ENCODE measurements at regions of chr1 and their contacts with region 1.

Region 1: DNA sequence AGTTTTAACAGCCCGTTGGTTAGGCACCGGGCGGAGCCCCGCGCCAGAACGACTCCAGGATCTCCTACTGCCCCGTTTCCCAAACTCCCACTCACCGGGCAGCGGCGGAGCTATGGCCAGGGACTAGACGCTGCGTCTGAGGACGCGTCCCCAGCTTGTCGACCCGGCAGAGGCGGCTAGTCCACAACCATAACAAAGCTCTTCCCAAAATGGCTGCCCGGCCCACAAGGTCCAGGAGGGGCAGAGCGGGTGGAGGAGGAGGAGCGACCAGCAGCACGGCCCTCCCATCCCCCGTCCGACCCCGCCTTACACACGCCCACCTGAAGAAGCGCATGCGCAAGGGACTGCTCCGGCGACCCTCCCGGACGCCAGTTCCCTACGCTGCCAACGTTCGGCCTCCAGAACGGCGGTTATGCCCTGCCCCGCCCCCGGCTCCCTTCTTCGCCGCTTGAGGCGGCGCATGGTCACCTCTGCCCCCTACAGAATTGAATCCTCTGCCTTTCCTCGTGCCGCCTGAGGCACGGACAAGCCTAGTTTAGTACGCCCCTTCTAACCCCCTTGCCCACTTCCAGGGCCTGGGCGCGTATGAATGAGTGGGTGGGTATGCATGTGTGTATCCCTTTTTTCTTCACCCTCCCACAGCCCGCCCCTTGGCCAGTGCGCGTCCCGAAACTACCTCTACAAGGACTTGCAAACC is at the start of gene GPBP1L1:
- DNase-seq: peak; percentile 98
- ATAC-seq: peak; percentile 76
- H3K4me3 ChIP-seq: peak within 1 kb of the TSS; percentile 87 to 99 (median 94)
- H3K27ac ChIP-seq: peak within 1 kb of the TSS; percentile 95 to 98 (median 97)
- H3K4me1 ChIP-seq: peaks cover 39 to 43% of the 10 kb centered on the region in 2 donors
- H3K27me3 ChIP-seq: no peaks in the 10 kb centered on the region
- CTCF ChIP-seq: peak in 2 of 5 experiments; percentile 4 to 20
- POLR2A ChIP-seq: peak; percentile 73 to 83
- total RNA-seq, gene GPBP1L1: 58.5 to 99.5 (median 81.8) TPM

Region 2: DNA sequence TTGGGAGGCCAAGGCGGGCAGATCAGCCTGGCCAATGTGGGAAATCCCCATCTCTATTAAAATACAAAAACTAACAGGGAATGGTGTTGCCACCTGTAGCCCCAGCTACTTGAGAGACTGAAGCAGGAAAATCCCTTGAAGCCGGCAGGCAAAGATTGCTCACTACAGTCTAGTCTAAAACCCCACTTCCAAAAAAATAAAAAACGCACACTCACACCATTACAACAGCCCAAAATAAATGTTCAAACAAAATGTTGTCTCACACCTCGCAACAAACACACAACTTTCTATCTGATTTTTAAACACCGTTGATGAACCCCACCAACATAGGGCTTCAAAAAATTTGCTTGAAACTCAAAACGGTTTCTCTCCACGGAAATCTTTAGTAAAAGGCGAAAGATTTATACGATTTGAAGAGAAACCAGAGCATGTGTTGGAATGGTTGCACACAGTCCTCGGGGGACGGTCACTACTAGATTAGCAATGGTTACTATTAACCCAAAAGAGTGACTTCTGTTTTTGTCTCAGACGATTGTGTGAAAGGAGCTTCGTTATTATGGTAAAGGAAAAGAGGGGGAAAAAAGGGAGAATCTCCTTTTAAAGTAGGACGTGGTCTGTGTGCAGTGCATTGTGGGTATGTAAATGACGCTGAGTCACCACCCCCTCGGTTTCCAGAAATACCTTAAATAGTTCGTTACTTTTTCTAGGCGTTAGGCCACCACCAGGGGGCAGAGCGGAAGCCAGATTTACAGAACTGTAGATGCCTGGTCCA is 955.5 kb before region 1 on chr1 and contains the start of gene RNU5D-1:
- in situ Hi-C with region 1: no loop called
- intact Hi-C with region 1: loop called (anchors 10 kb)
- DNase-seq: peak; percentile 80 to 94
- ATAC-seq: peak; percentile 81 to 87
- H3K4me3 ChIP-seq: peak within 1 kb of the TSS in 3 of 4 donors; percentile 3 to 34 (median 3)
- H3K27ac ChIP-seq: peak within 1 kb of the TSS; percentile 70 to 87 (median 79)
- H3K4me1 ChIP-seq: peaks cover 9 to 12% of the 10 kb centered on the region in 2 donors
- H3K27me3 ChIP-seq: no peaks in the 10 kb centered on the region
- CTCF ChIP-seq: peak; percentile 77 to 89 (median 81)
- POLR2A ChIP-seq: peak; percentile 79 to 97
- total RNA-seq, gene RNU5D-1: not detected

Region 3: DNA sequence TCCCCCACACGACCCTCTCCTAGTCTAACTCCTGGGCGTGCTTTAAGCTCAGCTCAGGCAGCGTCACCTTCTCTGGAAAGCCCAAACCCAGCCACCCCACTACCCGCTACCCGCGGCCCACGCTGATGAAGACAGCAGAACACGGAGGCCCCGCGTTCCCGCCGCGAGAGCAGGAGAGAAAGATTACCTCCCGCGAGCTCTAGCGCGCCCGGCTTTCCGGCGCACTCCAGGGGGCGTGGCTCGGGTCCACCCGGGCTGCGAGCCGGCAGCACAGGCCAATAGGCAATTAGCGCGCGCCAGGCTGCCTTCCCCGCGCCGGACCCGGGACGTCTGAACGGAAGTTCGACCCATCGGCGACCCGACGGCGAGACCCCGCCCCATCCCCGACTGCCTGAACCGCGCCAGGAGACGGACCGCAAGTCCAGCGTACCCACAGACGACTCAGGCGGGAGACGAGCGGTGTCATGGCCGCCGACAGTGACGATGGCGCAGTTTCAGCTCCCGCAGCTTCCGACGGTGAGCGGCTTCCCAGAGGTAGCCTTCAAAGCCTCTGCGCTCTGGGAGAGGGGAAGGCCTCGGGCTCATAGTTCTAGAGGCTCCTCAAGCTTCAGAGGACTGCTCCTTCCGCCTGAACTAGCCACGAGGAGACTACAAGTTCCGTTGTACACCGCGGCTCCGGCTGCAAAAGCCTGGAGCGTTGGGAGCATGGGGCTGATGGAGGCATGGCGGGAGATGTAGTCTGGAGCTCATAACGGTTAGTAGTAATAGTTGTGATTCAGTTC is 346.5 kb before region 1 on chr1 and contains the starts of genes MUTYH and TOE1:
- in situ Hi-C with region 1: no loop called
- intact Hi-C with region 1: loop called (anchors 10 kb)
- DNase-seq: peak; percentile 81 to 88
- ATAC-seq: peak; percentile 92 to 93
- H3K4me3 ChIP-seq: peak within 1 kb of the TSS; percentile 88 to 98 (median 96)
- H3K27ac ChIP-seq: peak within 1 kb of the TSS; percentile 92 to 100 (median 100)
- H3K4me1 ChIP-seq: peaks cover 17 to 18% of the 10 kb centered on the region in 2 donors
- H3K27me3 ChIP-seq: no peaks in the 10 kb centered on the region
- CTCF ChIP-seq: peak in 2 of 5 experiments; percentile 26 to 34
- POLR2A ChIP-seq: peak; percentile 56
- total RNA-seq, gene MUTYH: 10.1 to 20.6 (median 11.0) TPM
- total RNA-seq, gene TOE1: 2.9 to 9.4 (median 5.3) TPM

Region 4: GRCh38 chr1:45583264-45583665 is 103.2 kb before region 1 on chr1:
- in situ Hi-C with region 1: loop called in 1 of 4 experiments (anchors 25 kb)
- intact Hi-C with region 1: loop called (anchors 1 kb)
- DNase-seq: peak; percentile 95 to 96
- ATAC-seq: peak; percentile 92 to 96
- H3K4me3 ChIP-seq: peak overlapping the region; percentile 82 to 97 (median 94)
- H3K27ac ChIP-seq: peak overlapping the region; percentile 92 to 99 (median 96)
- H3K4me1 ChIP-seq: peaks cover 22 to 23% of the 10 kb centered on the region in 2 donors
- H3K27me3 ChIP-seq: no peaks in the 10 kb centered on the region
- CTCF ChIP-seq: no peak
- POLR2A ChIP-seq: no peak

Region 5: DNA sequence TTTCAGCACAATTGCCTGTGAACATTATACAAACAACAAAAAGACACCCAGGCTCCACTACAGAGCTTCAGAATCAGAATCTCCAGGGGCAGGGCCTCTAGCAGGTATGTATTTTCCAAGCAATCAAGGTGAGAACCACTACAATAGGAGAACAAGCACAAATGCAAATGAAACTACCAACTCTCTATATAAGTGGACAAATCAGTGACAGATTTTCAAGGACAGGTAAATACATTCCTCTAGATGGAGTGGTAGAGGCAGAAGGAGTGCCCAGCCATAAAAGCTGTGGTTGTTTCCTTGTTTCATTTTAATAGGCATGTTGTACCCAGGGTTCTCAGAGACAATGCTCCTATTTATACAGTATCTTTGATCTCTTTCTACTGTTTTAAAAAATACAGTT is 42.5 kb before region 1 on chr1:
- in situ Hi-C with region 1: no loop called
- intact Hi-C with region 1: no loop called
- DNase-seq: no peak
- ATAC-seq: peak in 1 of 2 donors; percentile 21
- H3K4me3 ChIP-seq: no peak overlapping the region
- H3K27ac ChIP-seq: peak overlapping the region in 1 of 4 donors; percentile 25
- H3K4me1 ChIP-seq: no peaks in the 10 kb centered on the region
- H3K27me3 ChIP-seq: no peaks in the 10 kb centered on the region
- CTCF ChIP-seq: no peak
- POLR2A ChIP-seq: no peak

Region 6: DNA sequence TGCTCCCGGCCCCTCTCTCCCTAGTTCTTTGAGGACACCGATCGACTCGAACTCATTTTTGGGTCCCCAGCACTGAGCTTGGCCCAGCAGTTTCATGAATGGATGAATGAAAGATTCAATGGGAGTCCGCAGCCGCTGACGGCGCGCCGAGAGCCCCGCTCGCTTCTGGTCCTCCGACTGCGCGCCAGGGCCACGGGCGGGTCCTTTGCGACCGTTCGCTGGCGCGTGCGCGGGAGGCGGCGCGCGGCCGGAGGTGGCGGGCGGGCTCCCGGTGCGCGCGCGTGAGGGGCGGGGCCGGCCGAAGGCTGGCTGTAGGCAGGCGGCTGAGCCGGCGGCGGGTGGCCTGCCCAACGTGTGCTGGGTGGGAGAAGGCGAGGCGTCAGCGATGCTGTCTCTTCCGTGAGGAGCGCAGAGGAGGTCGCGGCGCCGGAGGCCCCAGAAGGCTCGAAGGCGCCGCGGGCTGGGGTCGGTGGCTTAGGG is 116.9 kb after region 1 on chr1 and contains the start of gene MAST2:
- in situ Hi-C with region 1: no loop called
- intact Hi-C with region 1: loop called (anchors 2 kb)
- DNase-seq: peak; percentile 77 to 87
- ATAC-seq: peak; percentile 65 to 80
- H3K4me3 ChIP-seq: peak within 1 kb of the TSS; percentile 64 to 79 (median 72)
- H3K27ac ChIP-seq: peak within 1 kb of the TSS; percentile 88 to 96 (median 92)
- H3K4me1 ChIP-seq: peaks cover 22 to 40% of the 10 kb centered on the region in 2 donors
- H3K27me3 ChIP-seq: no peaks in the 10 kb centered on the region
- CTCF ChIP-seq: peak in 2 of 5 experiments; percentile 21 to 30
- POLR2A ChIP-seq: peak; percentile 97 to 98
- total RNA-seq, gene MAST2: 110 to 195 (median 162) TPM

Region 7: GRCh38 chr1:46132529-46133180 is 446.2 kb after region 1 on chr1 and contains the start of gene PIK3R3:
- in situ Hi-C with region 1: no loop called
- intact Hi-C with region 1: loop called (anchors 10 kb)
- DNase-seq: peak; percentile 98
- ATAC-seq: peak; percentile 82 to 84
- H3K4me3 ChIP-seq: peak within 1 kb of the TSS; percentile 76 to 95 (median 84)
- H3K27ac ChIP-seq: peak within 1 kb of the TSS; percentile 96 to 99 (median 98)
- H3K4me1 ChIP-seq: peaks cover 39 to 44% of the 10 kb centered on the region in 2 donors
- H3K27me3 ChIP-seq: peaks cover 0 to 10% (median 6%) of the 10 kb centered on the region in 3 donors
- CTCF ChIP-seq: peak in 2 of 5 experiments; percentile 18 to 24
- POLR2A ChIP-seq: peak; percentile 95 to 98
- total RNA-seq, gene PIK3R3: 12.1 to 23.8 (median 15.9) TPM

Region 8: DNA sequence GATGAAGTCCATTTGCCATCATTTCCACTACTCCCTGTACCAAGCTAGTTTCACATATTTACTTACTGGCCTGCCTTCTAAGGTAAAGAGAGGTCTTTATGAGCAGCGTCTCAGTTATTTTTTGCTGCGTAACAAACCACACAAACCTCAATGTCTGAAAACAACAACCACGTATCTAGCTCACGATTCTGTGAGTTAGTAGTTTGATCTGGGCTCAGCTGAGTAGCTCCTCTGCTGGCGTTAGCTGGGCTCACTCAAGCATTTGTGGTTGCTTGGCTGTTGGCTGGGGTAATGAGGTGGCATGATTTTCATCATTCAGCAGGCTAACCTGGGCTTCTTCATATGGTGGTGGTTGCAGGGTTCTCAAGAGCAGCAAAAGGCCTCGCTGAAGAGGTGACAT is 1976.8 kb after region 1 on chr1:
- in situ Hi-C with region 1: no loop called
- intact Hi-C with region 1: no loop called
- DNase-seq: no peak
- ATAC-seq: no peak
- H3K4me3 ChIP-seq: no peak overlapping the region
- H3K27ac ChIP-seq: no peak overlapping the region
- H3K4me1 ChIP-seq: no peaks in the 10 kb centered on the region
- H3K27me3 ChIP-seq: no peaks in the 10 kb centered on the region
- CTCF ChIP-seq: no peak
- POLR2A ChIP-seq: no peak

Measured in gastrocnemius medialis (tissue), 4 donors.